ENCODE measurements at regions of chr7 and their contacts with region 1.

Region 1: DNA sequence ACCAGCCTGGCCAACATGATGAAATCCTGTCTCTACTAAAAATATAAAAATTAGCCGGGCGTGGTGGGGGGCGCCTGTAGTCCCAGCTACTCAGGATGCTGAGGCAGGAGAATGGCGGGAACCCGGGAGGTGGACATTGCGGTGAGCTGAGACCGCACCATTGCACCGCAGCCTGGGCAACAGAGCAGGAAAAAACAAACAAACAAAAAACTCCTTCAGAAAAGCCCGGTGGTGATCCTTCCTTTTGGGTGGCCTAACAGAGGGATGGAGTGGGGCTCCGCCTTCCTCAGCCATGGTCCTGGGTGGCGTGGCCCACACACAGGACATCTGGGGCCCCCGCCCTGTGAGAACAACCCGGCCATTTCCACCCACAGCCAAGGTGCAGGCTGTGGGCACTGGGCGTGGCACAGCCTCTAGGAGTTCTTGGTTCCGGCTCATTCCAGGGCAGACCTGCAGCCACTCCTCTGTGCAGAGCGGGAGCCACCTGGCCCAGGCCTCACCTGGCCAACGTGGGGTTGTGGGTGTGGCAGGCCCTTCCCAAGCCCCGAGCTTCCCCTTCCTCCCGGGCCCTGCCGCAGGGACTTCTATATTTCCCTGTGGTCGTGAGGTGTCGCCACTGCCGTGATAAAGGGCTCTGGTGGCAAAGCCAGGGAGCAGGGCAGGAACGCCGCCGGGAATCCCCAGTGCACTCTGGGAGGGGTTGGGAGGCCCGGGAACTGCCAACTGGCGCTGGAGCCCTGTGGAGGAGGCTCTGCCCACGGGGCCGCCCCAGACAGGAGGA is 37.6 kb downstream of the GET4 start:
- DNase-seq: peak; percentile 85
- ATAC-seq: peak; percentile 81
- H3K4me3 ChIP-seq: no peak overlapping the region; the same call in 1 of the 2 replicates
- H3K27ac ChIP-seq: peak overlapping the region; percentile 63
- H3K4me1 ChIP-seq: peaks cover 12% of the 10 kb centered on the region
- H3K27me3 ChIP-seq: no peaks in the 10 kb centered on the region
- CTCF ChIP-seq: peak; percentile 55

Region 2: GRCh38 chr7:949021-949934 is 35.4 kb after region 1 on chr7:
- CTCF ChIA-PET with region 1: interaction called, 3 read pairs
- POLR2A ChIA-PET with region 1: no interaction called
- intact Hi-C with region 1: loop called (anchors 1 kb)
- DNase-seq: peak; percentile 71
- ATAC-seq: peak; percentile 37
- H3K4me3 ChIP-seq: no peak overlapping the region
- H3K27ac ChIP-seq: peak overlapping the region; percentile 51
- H3K4me1 ChIP-seq: peaks cover 36% of the 10 kb centered on the region
- H3K27me3 ChIP-seq: no peaks in the 10 kb centered on the region
- CTCF ChIP-seq: no peak